ENCODE measurements at regions of chr6 and their contacts with region 1.

Region 1: GRCh38 chr6:83472767-83473166 is 39.6 kb upstream of the PRSS35 start:
- DNase-seq: peak in 1 of 2 donors; percentile 26
- ATAC-seq: peak; percentile 87 to 89
- H3K4me3 ChIP-seq: peak overlapping the region in 1 of 4 donors; percentile 15
- H3K27ac ChIP-seq: peak overlapping the region; percentile 13 to 54 (median 32)
- H3K4me1 ChIP-seq: peaks cover 17 to 29% of the 10 kb centered on the region in 2 donors
- H3K27me3 ChIP-seq: no peaks in the 10 kb centered on the region
- CTCF ChIP-seq: no peak
- POLR2A ChIP-seq: no peak

Region 2: GRCh38 chr6:82521369-82521768 is 951.4 kb before region 1 on chr6:
- in situ Hi-C with region 1: no loop called
- intact Hi-C with region 1: no loop called
- DNase-seq: no peak
- ATAC-seq: no peak
- H3K4me3 ChIP-seq: no peak overlapping the region
- H3K27ac ChIP-seq: no peak overlapping the region
- H3K4me1 ChIP-seq: no peaks in the 10 kb centered on the region
- H3K27me3 ChIP-seq: no peaks in the 10 kb centered on the region
- CTCF ChIP-seq: no peak
- POLR2A ChIP-seq: no peak

Region 3: DNA sequence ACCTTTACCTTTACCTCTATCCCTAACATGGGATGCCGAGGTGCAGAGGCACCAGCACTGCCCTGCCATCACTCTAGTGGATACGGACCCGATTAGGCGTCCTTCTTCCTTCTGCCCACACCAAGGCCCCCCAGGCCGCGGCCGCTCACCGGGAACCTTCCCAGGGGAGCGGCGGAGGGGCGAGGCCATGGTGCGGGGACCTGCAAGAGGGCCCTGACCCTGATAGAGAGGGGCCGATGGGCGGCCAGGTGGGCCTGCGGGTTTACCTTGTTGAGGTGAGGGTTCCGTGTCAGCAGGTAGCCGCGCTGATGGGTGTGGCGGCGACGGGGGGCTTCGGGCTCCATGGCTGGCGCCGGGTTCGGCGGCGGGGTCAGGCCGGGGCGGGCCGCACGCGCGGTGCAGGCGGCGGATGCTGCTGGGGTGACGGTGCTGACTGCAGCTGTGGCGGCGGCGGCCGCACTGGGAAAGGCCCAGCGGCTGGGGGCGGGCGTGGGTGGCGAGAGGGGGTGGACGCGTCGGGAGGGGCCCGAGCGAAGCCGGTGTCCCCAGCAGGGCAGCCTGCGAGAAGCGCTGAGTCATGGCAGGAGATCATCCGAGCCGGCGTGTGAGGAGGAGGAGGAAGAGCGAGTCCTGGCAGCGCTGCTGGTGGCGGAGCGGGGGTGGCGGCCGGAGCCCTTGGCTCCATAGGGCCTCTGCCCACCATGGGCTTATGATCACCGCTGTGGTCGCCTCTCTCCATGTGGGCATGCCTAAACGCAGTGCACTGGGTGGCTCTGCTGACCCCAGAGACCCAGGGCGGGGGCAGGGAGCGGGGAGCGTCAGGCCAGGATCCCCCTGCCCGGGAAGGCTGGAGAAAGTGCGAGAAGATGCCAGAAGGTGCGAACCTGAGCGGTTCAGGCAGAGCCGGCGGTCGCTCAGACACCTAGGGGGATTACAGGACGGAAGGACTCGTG is 41.9 kb before region 1 on chr6 and contains the start of gene ME1:
- in situ Hi-C with region 1: no loop called
- intact Hi-C with region 1: loop called (anchors 2 kb)
- DNase-seq: peak; percentile 67 to 80
- ATAC-seq: peak; percentile 83
- H3K4me3 ChIP-seq: peak within 1 kb of the TSS; percentile 64 to 76 (median 70)
- H3K27ac ChIP-seq: peak within 1 kb of the TSS; percentile 82 to 91 (median 85)
- H3K4me1 ChIP-seq: peaks cover 11 to 18% of the 10 kb centered on the region in 2 donors
- H3K27me3 ChIP-seq: no peaks in the 10 kb centered on the region
- CTCF ChIP-seq: no peak
- POLR2A ChIP-seq: peak; percentile 35 to 38
- total RNA-seq, gene ME1: 15.6 to 36.8 (median 25.4) TPM

Measured in gastrocnemius medialis (tissue), 4 donors.